ENCODE measurements at regions of chr2 and their contacts with region 1.

Region 1: DNA sequence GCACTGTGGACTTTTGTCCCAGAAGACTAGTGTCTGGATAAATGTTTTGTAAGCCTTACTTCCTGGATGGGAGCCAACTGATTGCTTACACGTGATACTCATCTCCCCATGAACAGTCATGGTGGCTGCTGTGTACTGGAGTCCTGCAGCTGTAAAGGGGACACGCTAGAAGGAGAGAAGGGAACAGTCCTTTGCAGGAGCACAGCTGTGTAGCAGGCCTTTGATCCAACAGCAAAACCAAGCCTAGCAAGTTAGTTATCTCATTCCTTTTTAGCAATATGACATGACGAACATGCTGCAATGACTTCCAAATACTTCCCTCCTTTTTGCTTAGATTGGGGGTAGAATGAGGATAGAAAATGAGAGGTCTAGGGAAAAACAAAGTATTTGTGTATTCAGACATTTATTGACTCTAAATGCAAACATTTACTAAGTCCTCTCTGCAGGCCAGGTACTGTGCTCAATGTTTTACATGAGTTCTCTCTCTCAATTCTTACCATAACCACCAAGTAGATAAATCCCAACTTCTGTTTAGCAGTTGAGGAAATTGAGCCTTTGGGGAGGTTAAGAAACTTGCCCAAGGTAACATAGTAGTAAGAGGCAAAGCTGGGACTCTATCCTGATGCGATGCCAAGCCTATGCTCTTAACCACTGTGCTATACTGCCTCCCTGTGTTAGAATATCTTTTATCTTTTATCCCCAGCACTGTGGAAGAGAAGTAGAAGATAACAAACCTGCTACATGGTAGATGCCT is 55.4 kb upstream of the CD28 start:
- DNase-seq: peak; percentile 68
- H3K4me3 ChIP-seq: no peak overlapping the region
- H3K27ac ChIP-seq: peak overlapping the region; percentile 89
- H3K4me1 ChIP-seq: peaks cover 26% of the 10 kb centered on the region
- H3K27me3 ChIP-seq: no peaks in the 10 kb centered on the region
- CTCF ChIP-seq: peak; percentile 50 to 61

Region 2: GRCh38 chr2:202577250-202578183 is 1073.5 kb before region 1 on chr2:
- CTCF ChIA-PET with region 1: no interaction called
- dilution Hi-C with region 1: no loop called
- in situ Hi-C with region 1: no loop called
- intact Hi-C with region 1: loop called (anchors 5 kb)
- DNase-seq: no peak
- H3K4me3 ChIP-seq: no peak overlapping the region
- H3K27ac ChIP-seq: no peak overlapping the region
- H3K4me1 ChIP-seq: no peaks in the 10 kb centered on the region
- H3K27me3 ChIP-seq: no peaks in the 10 kb centered on the region
- CTCF ChIP-seq: no peak

Region 3: GRCh38 chr2:203225423-203226039 is 425.5 kb before region 1 on chr2:
- CTCF ChIA-PET with region 1: no interaction called
- dilution Hi-C with region 1: no loop called
- in situ Hi-C with region 1: loop called in 1 of 2 experiments (anchors 25 kb)
- intact Hi-C with region 1: loop called (anchors 1 kb)
- DNase-seq: peak; percentile 5
- H3K4me3 ChIP-seq: no peak overlapping the region
- H3K27ac ChIP-seq: no peak overlapping the region
- H3K4me1 ChIP-seq: no peaks in the 10 kb centered on the region
- H3K27me3 ChIP-seq: no peaks in the 10 kb centered on the region
- CTCF ChIP-seq: peak; percentile 62 to 72

Region 4: DNA sequence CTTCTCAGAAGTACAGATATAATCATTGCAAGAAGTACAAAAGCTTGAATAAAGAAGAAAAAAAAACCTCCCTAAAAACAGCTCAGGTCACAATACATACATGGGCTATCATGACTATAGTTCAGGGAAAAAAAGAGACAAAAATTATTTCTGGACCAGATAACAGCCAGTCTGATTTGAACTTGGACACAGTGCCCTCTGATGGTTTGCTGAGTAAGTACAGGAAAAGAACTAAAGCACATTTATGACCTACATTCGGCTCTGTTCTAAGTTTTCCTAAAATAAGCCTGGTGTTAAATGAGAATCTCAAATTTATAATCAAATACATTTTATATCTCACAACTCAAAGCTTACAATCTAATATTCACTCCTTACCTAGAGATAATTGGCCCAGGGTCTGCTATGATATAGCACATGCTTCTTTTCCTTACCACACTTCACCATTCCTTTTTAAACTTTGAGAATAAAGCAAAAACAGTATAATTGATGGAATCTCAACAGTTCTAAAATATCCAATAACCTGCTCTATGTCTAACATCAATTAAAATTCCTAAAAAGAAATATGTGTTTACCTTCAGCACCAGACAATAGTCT is 197.1 kb before region 1 on chr2:
- CTCF ChIA-PET with region 1: no interaction called
- dilution Hi-C with region 1: no loop called
- in situ Hi-C with region 1: no loop called
- intact Hi-C with region 1: loop called (anchors 1 kb)
- DNase-seq: peak; percentile 21
- H3K4me3 ChIP-seq: no peak overlapping the region
- H3K27ac ChIP-seq: no peak overlapping the region
- H3K4me1 ChIP-seq: peaks cover 5% of the 10 kb centered on the region
- H3K27me3 ChIP-seq: no peaks in the 10 kb centered on the region
- CTCF ChIP-seq: peak; percentile 72 to 76

Region 5: DNA sequence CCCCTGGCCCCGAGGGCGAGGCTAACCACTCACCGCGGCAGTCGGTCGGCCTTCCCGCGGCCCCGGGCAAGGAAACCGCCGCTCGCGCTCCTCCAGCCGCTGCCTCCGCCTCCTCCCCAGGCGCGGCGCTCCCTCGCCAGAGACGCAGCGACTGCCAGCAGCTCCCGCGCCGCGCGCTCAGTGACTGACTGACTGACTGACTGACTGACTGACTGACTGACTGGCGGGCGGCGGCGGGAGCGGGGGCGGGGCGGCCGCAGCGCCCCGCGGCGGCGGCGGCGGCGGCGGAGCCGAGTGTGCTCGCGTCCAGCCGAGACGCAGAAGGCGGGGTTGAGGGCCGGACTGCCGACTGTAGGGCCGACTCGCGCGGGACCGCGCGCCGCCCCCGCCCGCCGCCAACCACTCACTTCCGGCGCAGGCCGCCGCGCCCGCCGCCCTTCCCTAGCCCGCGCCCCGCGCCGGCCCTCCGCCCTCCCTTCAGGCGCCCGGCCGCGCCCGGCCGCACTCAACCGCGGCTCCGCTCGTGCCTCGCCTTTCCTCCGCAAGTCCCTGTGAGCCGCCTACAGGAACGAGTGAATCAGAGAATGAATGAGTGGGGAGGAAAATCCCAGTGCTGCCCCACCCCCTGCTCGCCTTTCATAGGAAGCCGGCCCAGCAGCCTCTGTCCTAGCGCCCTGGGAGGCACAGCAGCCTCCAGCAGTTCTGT is 115.8 kb before region 1 on chr2 and contains the start of gene RAPH1:
- CTCF ChIA-PET with region 1: no interaction called
- dilution Hi-C with region 1: no loop called
- in situ Hi-C with region 1: no loop called
- intact Hi-C with region 1: loop called (anchors 1 kb)
- DNase-seq: peak; percentile 94
- H3K4me3 ChIP-seq: peak within 1 kb of the TSS; percentile 89 to 96 (median 95)
- H3K27ac ChIP-seq: peak within 1 kb of the TSS; percentile 85
- H3K4me1 ChIP-seq: peaks cover 26% of the 10 kb centered on the region
- H3K27me3 ChIP-seq: no peaks in the 10 kb centered on the region
- CTCF ChIP-seq: no peak
- total RNA-seq, gene RAPH1: 12.5 to 42.2 TPM

Region 6: DNA sequence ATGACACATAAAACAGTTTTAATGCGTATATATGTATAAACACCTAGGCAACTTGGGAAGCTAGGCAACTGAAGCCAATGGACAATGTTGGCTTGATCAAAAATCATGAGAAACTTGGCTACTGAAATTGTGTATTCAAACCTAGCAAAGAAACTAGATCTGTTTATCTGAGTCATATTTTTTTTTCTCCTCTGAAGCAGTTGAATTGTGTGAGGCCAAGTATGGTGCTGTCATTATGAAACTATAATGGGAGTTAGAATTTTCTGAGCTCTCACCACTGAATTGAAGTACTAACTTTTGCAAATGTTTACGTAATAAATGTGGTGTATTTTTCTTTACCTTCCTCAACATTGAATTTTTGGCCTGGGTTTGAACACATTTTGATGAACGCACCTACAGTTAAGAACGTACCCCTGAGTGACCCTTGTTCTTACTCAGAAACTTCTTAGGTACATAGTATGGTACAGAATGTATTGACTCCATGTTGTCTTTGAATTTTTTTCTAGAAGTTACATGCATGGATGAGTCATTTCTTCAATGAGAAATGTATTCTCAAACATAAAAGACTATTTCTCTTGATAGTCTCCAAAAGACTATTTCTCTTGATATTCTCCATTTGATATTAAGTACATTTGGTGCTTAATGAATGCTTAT is 79.2 kb after region 1 on chr2:
- CTCF ChIA-PET with region 1: no interaction called
- dilution Hi-C with region 1: no loop called
- in situ Hi-C with region 1: no loop called
- intact Hi-C with region 1: no loop called
- DNase-seq: peak; percentile 26
- H3K4me3 ChIP-seq: no peak overlapping the region
- H3K27ac ChIP-seq: peak overlapping the region; percentile 56
- H3K4me1 ChIP-seq: peaks cover 15% of the 10 kb centered on the region
- H3K27me3 ChIP-seq: no peaks in the 10 kb centered on the region
- CTCF ChIP-seq: no peak

Region 7: DNA sequence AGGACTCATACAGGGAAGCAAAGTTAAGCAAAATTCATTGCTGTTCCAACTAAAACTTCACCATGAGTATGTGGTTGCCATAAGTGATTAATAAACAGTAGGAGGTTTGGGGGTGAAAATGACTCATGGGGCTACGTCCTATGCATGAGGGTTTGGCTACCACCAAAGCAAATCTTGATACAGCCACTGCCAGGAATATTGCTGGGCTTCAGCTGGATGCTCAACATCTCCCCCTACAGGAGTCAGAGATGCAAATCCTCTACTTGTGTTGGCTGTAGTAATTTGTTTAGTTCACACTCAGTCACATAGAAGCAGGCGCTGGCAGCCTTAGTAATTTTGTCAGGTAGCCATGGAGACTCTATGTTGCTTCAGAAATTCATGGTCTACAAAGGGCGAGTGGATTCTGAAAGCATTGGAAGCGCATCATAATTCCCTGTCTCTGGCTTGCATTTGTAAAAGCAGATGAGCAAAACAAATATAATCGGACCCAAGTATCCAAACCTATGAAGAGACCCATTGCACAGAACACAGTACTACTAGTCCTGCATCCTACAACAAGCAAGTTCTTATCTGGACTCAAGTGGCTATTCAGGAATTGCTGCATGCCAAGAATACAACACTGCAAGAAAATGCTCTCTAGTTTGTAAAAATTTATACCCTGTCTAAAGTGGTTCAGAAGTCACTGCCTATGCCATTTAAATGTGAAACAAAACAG is 131.4 kb after region 1 on chr2:
- CTCF ChIA-PET with region 1: no interaction called
- dilution Hi-C with region 1: no loop called
- in situ Hi-C with region 1: no loop called
- intact Hi-C with region 1: loop called (anchors 1 kb)
- DNase-seq: peak; percentile 94
- H3K4me3 ChIP-seq: no peak overlapping the region
- H3K27ac ChIP-seq: peak overlapping the region; percentile 83
- H3K4me1 ChIP-seq: peaks cover 10% of the 10 kb centered on the region
- H3K27me3 ChIP-seq: no peaks in the 10 kb centered on the region
- CTCF ChIP-seq: peak; percentile 88 to 96